Head of caudate nucleus (tissue), 42 donors: ENCODE measurements at regions of chr4 and their contacts with region 1.

Region 1: DNA sequence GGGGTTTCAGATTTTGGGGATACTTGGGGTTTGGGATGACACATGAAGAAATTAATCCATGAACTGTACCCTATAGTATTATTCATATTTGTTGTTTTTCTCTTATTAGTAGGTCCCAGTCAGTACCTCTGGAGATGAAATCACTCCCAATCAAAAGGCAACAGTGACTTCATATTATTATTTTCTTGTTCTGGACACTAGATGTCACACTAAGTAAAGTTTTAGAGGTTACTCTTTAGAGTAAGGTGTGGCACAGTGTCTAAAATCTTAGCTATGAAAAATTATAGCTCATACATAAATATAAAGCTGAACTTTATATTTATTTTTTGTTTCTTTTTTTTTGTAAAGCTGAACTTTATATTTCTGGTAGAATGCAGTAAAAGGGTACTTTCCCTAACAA is 35.1 kb downstream of the FAM114A1 start:
- DNase-seq: no peak

Region 2: GRCh38 chr4:39134683-39135319 is 232.1 kb after region 1 on chr4:
- intact Hi-C with region 1: loop called (anchors 5 kb)
- DNase-seq: no peak

Region 3: DNA sequence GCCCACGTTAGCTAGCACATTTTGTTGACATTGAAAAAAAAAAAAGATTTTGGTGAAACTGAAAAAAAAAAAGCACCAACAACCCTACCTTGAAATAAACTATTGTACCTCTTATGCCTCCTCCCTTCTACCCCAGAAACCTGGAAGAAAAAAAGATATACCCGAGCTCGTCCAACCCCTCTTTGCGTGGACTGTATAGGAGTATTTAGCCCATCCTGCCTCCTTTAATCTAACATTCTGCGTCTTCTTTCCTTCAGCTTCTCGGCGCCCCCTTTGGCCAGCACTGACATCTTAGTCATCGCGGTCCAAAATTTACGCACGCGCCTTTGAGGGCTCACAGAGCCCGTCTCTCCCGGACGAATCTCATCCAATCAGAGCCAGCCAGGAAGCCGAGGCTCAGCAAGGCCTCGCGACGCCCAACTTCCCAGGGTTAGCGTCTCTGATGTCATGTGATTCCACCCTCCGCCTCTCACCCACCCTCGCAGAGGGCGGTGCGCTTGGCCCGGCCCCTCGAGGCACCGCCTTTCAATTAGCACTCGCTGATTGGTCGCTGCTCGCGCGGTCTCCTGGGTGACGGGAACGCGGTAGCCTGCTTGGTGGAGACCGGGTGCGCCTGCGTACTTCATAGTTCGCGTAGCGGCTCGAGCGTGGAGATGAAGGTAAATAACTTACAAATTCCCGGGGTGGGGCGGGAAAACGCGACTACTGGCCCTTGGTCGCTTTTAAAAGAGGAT is 279.4 kb after region 1 on chr4 and contains the start of gene WDR19:
- intact Hi-C with region 1: loop called (anchors 5 kb)
- DNase-seq: peak; percentile 97 to 100 (median 100)

Region 4: GRCh38 chr4:39458505-39459300 is 556.0 kb after region 1 on chr4 and contains the starts of genes LIAS and RPL9:
- intact Hi-C with region 1: loop called (anchors 10 kb)
- DNase-seq: peak; percentile 76 to 97 (median 93)